ENCODE measurements at regions of chr19 and their contacts with region 1.

Region 1: DNA sequence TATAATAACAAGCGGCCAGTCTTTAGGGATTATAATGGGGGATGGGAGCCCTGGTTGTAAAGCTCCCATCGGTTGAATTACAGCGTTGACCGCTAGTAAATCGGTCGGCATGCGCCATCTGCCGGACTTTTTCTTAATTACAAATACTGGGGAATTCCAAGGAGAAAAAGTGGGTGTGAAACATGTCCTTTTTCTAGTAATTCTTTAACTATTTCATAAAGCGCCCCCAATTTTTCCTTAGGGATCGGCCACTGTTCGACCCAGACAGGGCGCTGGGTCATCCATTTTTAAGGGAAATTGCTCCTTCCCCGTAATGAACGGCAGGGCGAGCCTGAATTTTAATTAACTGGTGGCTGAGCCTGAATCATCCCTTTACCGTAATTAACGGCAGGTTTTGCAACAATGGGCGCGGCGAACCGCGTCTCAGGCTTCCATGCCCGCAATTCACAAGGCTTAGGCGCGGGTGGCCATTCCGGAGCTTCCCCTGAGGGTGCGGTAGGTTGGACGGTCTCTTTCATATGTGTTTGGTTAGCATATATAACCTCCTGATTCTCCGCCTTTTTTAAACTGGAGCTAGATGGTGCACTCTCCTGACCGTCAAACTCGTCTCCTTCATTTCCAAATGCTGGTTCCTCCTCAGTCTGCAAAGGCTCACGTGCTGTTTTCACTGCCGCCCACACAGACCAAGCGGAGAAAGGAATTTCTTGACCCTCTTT is 30.2 kb upstream of the EVI5L start:
- DNase-seq: peak; percentile 67
- H3K4me3 ChIP-seq: peak overlapping the region in 1 of 4 donors; percentile 7
- H3K27ac ChIP-seq: no peak overlapping the region
- H3K4me1 ChIP-seq: peaks cover 3 to 21% (median 4%) of the 10 kb centered on the region in 4 donors
- H3K27me3 ChIP-seq: peaks cover 57% of the 10 kb centered on the region
- CTCF ChIP-seq: peak; percentile 41 to 73 (median 49)
- EP300 ChIP-seq: no peak
- POLR2A ChIP-seq: no peak

Region 2: GRCh38 chr19:7349961-7350711 is 449.7 kb before region 1 on chr19:
- in situ Hi-C with region 1: loop called in 2 of 4 experiments (anchors 10 to 25 kb)
- intact Hi-C with region 1: no loop called
- DNase-seq: peak; percentile 48
- H3K4me3 ChIP-seq: peak overlapping the region in 1 of 4 donors; percentile 28
- H3K27ac ChIP-seq: peak overlapping the region; percentile 39 to 61 (median 48)
- H3K4me1 ChIP-seq: peaks cover under 1 to 7% (median 4%) of the 10 kb centered on the region in 4 donors
- H3K27me3 ChIP-seq: no peaks in the 10 kb centered on the region
- CTCF ChIP-seq: no peak
- EP300 ChIP-seq: no peak
- POLR2A ChIP-seq: peak; percentile 27

Region 3: DNA sequence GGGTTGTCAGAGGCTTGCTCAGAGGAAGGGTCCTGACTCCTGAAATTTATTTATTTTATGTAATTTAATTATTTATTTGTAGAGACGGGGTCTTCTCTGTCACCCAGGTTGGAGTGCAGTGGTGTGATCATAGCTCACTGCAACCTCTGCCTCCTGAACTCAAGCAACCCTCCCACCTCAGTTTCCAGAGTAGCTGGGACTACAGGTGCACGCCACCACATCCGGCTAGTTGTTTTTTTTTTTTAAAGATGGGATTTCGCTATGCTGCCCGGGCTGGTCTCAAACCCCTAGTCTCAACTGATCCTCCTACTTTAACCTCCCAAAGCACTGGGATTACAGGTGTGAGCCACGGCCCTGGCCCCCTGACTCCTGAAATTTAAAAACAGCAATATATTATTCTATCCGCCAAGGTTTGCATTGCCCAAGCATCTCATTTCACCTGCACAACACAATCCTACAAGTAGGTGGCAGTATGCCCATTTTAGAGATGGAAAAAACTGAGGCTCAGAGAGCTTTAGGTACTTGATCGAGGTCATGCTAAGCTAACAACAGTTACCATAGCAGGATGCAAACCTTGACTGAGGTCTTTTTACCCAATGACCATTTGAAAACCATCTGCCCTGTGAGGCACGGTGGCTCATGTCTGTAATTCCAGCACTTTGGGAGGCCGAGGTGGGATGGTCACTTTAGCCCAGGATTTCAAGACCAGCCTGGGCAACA is 432.9 kb before region 1 on chr19:
- in situ Hi-C with region 1: loop called in 1 of 4 experiments (anchors 25 kb)
- intact Hi-C with region 1: no loop called
- DNase-seq: no peak
- H3K4me3 ChIP-seq: no peak overlapping the region
- H3K27ac ChIP-seq: peak overlapping the region; percentile 46 to 67 (median 58)
- H3K4me1 ChIP-seq: peaks cover 0 to 21% (median 0%) of the 10 kb centered on the region in 4 donors
- H3K27me3 ChIP-seq: no peaks in the 10 kb centered on the region
- CTCF ChIP-seq: peak in 3 of 5 experiments; percentile 31 to 43 (median 38)
- EP300 ChIP-seq: no peak
- POLR2A ChIP-seq: no peak

Region 4: GRCh38 chr19:7550987-7551761 is 248.6 kb before region 1 on chr19:
- in situ Hi-C with region 1: loop called in 2 of 4 experiments (anchors 25 kb)
- intact Hi-C with region 1: no loop called
- DNase-seq: peak; percentile 81
- H3K4me3 ChIP-seq: peak overlapping the region in 3 of 4 donors; percentile 10 to 32 (median 21)
- H3K27ac ChIP-seq: peak overlapping the region in 2 of 4 donors; percentile 37 to 63
- H3K4me1 ChIP-seq: peaks cover 0 to 3% (median 1%) of the 10 kb centered on the region in 4 donors
- H3K27me3 ChIP-seq: no peaks in the 10 kb centered on the region
- CTCF ChIP-seq: no peak
- EP300 ChIP-seq: no peak
- POLR2A ChIP-seq: no peak

Region 5: DNA sequence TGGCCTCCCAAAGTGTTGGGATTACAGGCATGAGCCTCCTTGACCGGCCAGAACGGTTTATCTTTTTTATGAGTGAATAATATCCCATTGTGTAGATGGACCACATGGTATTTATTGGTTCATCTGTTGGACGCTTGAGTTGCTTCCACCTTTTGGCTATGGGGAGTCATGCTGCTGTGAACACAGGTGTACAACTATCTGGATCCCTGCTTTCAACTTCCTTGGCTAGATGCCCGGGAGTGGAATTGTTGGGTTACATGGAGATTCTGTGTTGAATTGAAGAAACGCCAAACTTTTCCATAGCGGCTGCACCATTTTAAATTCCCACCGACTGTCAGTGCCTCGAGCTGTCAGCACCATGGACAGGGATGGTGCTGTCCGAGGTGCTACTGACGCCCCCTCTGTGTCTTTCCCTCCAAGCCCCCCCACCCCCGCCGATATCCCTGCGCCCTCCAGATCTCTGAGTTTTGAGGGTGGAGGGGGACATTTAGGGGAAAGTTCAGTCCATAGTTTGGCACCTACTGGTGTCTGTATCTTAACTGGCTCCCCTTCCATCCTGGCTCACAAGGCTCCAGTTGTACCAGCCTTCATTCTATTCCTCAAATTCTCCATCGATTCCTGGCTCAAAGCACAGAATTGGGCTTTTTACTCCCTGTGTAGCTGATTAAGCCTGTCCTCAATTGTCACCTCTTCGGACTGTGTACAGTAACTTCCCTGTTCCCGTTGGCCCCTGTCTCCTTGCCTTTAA is 237.0 kb before region 1 on chr19:
- in situ Hi-C with region 1: loop called (anchors 5 to 25 kb)
- intact Hi-C with region 1: no loop called
- DNase-seq: no peak
- H3K4me3 ChIP-seq: no peak overlapping the region
- H3K27ac ChIP-seq: no peak overlapping the region
- H3K4me1 ChIP-seq: no peaks in the 10 kb centered on the region
- H3K27me3 ChIP-seq: no peaks in the 10 kb centered on the region
- CTCF ChIP-seq: no peak
- EP300 ChIP-seq: no peak
- POLR2A ChIP-seq: no peak

Region 6: DNA sequence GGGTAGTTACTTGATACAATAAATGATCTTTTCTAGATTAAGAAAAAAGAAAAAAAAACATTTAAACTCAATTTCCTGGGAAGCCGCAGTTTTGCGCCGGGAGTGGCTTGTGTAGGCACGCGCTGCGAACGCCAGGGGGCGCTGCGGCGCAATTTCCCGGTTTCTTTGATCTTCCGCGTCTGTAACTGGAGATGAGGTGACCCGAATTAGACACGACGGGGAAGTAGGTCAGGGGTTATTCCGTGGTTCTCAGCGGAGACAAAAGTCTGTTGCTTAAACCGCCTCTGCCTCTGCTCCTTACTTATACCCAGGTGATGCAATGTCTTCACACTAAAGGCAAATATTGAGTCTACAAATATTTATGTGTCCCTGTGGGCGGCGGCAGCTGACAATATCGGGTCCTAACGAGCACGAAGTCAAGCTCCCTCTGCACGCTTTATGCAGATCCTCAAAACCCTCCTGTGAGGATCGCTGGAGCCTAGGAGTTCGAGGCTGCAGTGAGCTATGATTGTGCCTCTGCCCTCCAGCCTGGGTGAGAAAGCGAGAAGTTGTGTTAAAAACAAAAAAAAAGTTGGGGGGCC is 147.6 kb before region 1 on chr19:
- in situ Hi-C with region 1: loop called in 2 of 4 experiments (anchors 10 to 25 kb)
- intact Hi-C with region 1: loop called (anchors 1 kb)
- DNase-seq: peak; percentile 89
- H3K4me3 ChIP-seq: peak overlapping the region in 2 of 4 donors; percentile 17 to 36
- H3K27ac ChIP-seq: peak overlapping the region; percentile 14 to 44 (median 37)
- H3K4me1 ChIP-seq: peaks cover 4 to 6% (median 4%) of the 10 kb centered on the region in 4 donors
- H3K27me3 ChIP-seq: peaks cover 3% of the 10 kb centered on the region
- CTCF ChIP-seq: peak; percentile 97 to 99 (median 99)
- EP300 ChIP-seq: no peak
- POLR2A ChIP-seq: no peak

Region 7: DNA sequence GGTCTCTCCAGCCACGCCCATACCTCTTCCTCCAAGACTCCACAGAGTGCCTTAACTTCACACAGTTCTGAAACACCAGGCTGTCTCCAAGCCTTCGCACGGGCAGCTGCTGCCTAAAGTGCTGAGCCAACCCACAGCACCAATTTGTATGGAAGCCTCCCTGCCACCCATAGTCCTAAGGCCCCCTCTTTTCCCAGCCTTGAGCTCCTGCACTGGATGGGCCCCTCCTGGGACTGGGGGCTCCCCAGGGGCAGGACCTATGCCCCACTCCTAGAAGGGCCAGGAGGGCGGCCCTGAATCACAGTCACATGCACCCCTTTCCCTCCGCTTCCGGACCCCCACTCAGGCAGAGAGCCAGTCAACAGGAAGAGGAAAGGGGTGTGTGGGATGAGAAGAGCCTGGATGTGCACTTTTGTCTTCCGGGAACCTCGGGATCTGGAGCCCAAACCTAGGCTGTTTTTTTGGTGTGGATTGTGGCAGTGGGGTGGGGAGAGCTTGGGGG is 92.8 kb before region 1 on chr19:
- in situ Hi-C with region 1: no loop called
- intact Hi-C with region 1: no loop called
- DNase-seq: no peak
- H3K4me3 ChIP-seq: no peak overlapping the region
- H3K27ac ChIP-seq: peak overlapping the region; percentile 9 to 26 (median 19)
- H3K4me1 ChIP-seq: no peaks in the 10 kb centered on the region
- H3K27me3 ChIP-seq: no peaks in the 10 kb centered on the region
- CTCF ChIP-seq: no peak
- EP300 ChIP-seq: no peak
- POLR2A ChIP-seq: no peak

Region 8: DNA sequence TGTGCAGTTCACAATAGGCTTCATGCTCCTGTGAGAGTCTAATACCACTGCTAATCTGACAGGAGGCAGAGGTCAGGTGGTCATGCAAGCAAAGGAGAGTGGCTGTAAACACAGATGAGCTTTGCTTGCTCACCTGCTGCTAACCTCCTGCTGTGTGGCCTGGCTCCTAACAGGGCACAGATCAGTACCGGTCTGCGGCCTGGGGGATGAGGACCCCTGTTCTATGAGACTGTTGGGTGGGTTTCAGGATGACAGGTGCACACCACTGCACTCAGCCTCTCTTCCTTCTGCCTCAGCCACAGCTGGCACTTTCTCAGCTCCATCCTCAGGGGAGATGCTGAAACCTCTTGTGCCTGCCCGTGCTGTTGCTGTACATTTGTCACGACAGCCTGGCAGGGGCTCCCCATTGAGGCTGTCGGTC is 77.6 kb before region 1 on chr19:
- in situ Hi-C with region 1: no loop called
- intact Hi-C with region 1: no loop called
- DNase-seq: no peak
- H3K4me3 ChIP-seq: no peak overlapping the region
- H3K27ac ChIP-seq: no peak overlapping the region
- H3K4me1 ChIP-seq: no peaks in the 10 kb centered on the region
- H3K27me3 ChIP-seq: peaks cover 3% of the 10 kb centered on the region
- CTCF ChIP-seq: no peak
- EP300 ChIP-seq: no peak
- POLR2A ChIP-seq: no peak

Measured in transverse colon (tissue), 4 donors.